PC-9 (cell line): ENCODE measurements at regions of chr12 and their contacts with region 1.

Region 1: DNA sequence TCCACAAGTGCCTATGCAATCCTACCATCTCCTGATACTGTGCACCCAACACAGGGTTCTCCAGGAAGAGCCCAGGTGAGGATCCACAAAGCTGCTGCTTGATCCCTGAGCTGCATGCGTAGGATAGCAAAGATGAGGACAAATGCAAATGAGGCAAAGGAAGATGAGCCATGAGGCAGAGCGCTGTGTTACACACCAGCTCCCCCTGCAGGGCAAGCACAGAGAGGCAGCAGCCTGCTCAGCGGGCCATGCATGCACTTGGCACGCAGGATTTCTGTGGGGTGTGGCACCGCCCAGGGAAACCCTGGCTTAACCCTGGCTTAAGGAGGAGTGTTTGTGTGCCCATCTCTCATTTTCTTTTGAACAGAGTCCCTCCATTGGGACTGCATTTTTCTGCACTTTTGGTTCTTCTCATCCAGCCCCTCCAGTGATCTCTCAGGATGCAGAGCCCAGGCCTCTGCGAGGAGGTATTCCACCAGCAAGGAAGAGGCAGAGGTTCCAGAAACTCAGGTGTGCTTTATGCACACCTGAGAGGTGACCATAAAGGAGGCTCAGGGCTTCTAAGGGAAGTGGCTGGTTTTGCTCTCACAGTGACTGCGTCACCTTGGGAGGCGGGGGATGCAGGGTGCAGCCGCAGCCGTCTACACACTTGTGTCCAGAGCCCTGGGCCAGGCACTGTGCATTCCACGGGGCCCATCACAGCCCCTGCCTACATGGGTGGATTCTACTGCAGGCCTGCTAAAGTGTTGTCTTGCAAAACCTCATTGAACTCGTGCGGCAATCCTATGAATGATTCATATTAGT is 973.3 kb upstream of the TMEM132C start:
- DNase-seq: peak; percentile 36 to 57
- H3K4me3 ChIP-seq: no peak overlapping the region
- H3K27ac ChIP-seq: no peak overlapping the region
- H3K4me1 ChIP-seq: no peaks in the 10 kb centered on the region
- H3K27me3 ChIP-seq: 0 out of 2 replicates have a peak, but pooled peaks cover 9% of the 10 kb centered on the region
- CTCF ChIP-seq: peak; percentile 73

Region 2: DNA sequence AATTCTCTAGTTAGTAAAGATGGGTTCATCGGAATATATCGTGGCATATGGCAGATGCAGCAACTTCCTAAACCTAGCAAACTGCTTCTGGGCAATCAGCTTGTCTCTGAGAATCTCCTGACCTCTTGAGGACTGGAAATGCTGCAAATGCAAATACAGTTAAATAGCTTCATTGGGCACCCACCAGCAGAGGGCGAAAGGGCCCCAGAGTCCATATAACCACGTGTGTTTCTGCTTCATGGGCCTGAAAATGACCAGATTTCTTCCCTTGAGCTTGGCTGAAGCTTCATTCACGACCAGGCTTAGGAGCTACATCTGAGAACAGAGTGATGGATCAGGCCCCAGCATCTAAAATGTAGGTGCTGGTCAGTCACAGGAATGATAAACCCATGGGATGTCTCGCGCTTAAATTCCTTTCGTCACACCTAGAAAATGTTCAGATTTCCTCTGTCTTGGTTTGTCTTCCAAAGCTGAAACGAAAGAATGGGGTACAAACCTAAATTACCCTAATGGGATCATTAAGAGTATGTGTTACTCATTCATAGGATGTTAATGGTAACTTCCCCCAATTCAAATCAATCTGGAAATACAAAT is 509.3 kb before region 1 on chr12:
- CTCF ChIA-PET with region 1: no interaction called
- POLR2A ChIA-PET with region 1: no interaction called
- intact Hi-C with region 1: loop called (anchors 10 kb)
- DNase-seq: peak in 1 of 2 experiments; percentile 35
- H3K4me3 ChIP-seq: no peak overlapping the region
- H3K27ac ChIP-seq: no peak overlapping the region
- H3K4me1 ChIP-seq: no peaks in the 10 kb centered on the region
- H3K27me3 ChIP-seq: no peaks in the 10 kb centered on the region
- CTCF ChIP-seq: peak; percentile 70

Region 3: GRCh38 chr12:126936181-126936851 is 357.4 kb before region 1 on chr12:
- CTCF ChIA-PET with region 1: no interaction called
- POLR2A ChIA-PET with region 1: no interaction called
- intact Hi-C with region 1: loop called (anchors 5 kb)
- DNase-seq: peak; percentile 46 to 72
- H3K4me3 ChIP-seq: no peak overlapping the region
- H3K27ac ChIP-seq: no peak overlapping the region
- H3K4me1 ChIP-seq: 0 out of 2 replicates have a peak, but pooled peaks cover 8% of the 10 kb centered on the region
- H3K27me3 ChIP-seq: no peaks in the 10 kb centered on the region
- CTCF ChIP-seq: no peak

Region 4: GRCh38 chr12:127108360-127109215 is 185.1 kb before region 1 on chr12:
- CTCF ChIA-PET with region 1: interaction called, 6 read pairs
- POLR2A ChIA-PET with region 1: no interaction called
- intact Hi-C with region 1: loop called (anchors 1 kb)
- DNase-seq: peak; percentile 44 to 50
- H3K4me3 ChIP-seq: no peak overlapping the region
- H3K27ac ChIP-seq: no peak overlapping the region
- H3K4me1 ChIP-seq: peaks cover 12% of the 10 kb centered on the region
- H3K27me3 ChIP-seq: no peaks in the 10 kb centered on the region
- CTCF ChIP-seq: peak; percentile 74

Region 5: DNA sequence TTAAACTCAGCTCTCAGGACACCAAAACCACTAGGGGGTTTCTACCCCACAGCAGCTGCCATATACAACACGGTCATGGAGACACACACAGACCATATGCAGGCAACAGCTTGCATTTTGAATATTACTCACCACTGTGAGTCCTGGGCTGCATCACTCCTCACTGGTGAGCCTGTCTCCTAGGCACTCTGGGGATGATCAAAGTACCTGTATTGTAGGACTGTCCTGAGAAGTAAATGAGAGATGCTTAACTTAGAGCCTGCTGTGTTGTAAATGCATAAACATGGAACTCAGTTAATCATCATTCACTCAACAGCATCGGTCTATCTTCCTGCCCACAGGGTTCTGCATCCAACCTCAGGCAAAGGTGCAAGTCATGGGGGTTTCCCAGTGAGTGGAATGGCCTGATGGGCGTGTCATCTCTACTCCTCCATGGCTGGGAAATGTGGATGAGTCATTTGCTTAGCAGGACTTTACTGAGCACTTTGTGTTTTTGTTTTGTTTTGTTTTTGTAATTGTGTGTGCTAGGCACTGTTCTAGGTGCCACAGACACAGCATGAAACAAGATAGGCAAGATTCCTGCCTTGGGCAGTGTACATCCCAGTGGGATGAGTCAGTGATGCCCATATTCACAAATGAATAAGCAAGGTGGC is 168.0 kb before region 1 on chr12:
- CTCF ChIA-PET with region 1: no interaction called
- POLR2A ChIA-PET with region 1: no interaction called
- intact Hi-C with region 1: loop called (anchors 5 kb)
- DNase-seq: peak; percentile 86 to 100
- H3K4me3 ChIP-seq: no peak overlapping the region
- H3K27ac ChIP-seq: peak overlapping the region; percentile 94
- H3K4me1 ChIP-seq: peaks cover 32% of the 10 kb centered on the region
- H3K27me3 ChIP-seq: no peaks in the 10 kb centered on the region
- CTCF ChIP-seq: no peak

Region 6: GRCh38 chr12:127280393-127281275 is 13.1 kb before region 1 on chr12:
- CTCF ChIA-PET with region 1: no interaction called
- POLR2A ChIA-PET with region 1: no interaction called
- intact Hi-C with region 1: no loop called
- DNase-seq: no peak
- H3K4me3 ChIP-seq: no peak overlapping the region
- H3K27ac ChIP-seq: no peak overlapping the region
- H3K4me1 ChIP-seq: no peaks in the 10 kb centered on the region
- H3K27me3 ChIP-seq: no peaks in the 10 kb centered on the region
- CTCF ChIP-seq: no peak